ENCODE measurements at regions of chr15 and their contacts with region 1.

Region 1: DNA sequence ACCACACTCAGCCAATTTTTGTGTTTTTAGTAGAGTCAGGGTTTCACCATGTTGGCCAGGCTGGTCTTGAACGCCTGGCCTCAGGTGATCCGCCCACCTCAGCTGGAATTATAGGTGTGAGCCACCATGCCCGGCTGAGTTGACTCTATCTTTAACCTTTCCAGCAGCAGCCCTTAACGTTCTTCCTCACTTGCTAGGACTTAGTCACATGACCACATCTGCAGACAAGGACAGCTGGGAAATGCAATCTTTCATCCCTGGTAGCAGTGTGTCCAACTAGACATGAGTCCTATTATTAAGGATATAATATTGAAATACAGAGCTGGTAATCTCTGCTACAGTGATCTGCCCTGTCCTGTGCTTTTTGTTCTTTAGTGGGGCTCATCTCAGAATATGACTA is 18.0 kb downstream of the LCMT2 start:
- DNase-seq: no peak
- H3K4me3 ChIP-seq: no peak overlapping the region
- H3K27ac ChIP-seq: no peak overlapping the region
- H3K4me1 ChIP-seq: no peaks in the 10 kb centered on the region
- H3K27me3 ChIP-seq: no peaks in the 10 kb centered on the region
- CTCF ChIP-seq: no peak
- POLR2A ChIP-seq: no peak

Region 2: DNA sequence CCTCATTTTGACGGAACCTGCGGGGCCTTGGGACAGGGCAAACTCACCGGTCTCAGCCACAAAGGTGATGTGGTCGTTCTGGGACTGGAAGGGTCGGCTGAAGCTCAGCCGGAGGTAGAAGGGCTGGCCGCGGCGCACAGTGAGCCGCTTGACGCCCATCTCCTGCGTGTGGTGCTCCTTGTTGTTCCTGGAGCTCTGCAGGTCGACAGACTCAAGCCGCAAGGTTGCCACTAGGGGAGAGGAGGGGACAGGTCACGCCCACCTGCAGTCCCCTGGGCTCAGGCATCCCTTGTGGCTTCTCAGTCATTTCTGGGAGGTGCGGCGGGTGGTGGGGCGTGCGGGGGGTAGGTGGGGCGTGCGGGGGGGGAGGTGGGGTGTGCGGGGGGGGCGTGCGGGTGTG is 19.0 kb before region 1 on chr15:
- intact Hi-C with region 1: loop called (anchors 2 kb)
- DNase-seq: no peak
- H3K4me3 ChIP-seq: no peak overlapping the region
- H3K27ac ChIP-seq: no peak overlapping the region
- H3K4me1 ChIP-seq: peaks cover 5% of the 10 kb centered on the region
- H3K27me3 ChIP-seq: no peaks in the 10 kb centered on the region
- CTCF ChIP-seq: no peak
- POLR2A ChIP-seq: no peak

Region 3: GRCh38 chr15:43541785-43542184 is 229.4 kb after region 1 on chr15:
- intact Hi-C with region 1: no loop called
- DNase-seq: no peak
- H3K4me3 ChIP-seq: no peak overlapping the region
- H3K27ac ChIP-seq: no peak overlapping the region
- H3K4me1 ChIP-seq: no peaks in the 10 kb centered on the region
- H3K27me3 ChIP-seq: no peaks in the 10 kb centered on the region
- CTCF ChIP-seq: no peak
- POLR2A ChIP-seq: no peak

Measured in vagina (tissue), 2 donors.